ENCODE measurements at regions of chr16 and their contacts with region 1.

Region 1: DNA sequence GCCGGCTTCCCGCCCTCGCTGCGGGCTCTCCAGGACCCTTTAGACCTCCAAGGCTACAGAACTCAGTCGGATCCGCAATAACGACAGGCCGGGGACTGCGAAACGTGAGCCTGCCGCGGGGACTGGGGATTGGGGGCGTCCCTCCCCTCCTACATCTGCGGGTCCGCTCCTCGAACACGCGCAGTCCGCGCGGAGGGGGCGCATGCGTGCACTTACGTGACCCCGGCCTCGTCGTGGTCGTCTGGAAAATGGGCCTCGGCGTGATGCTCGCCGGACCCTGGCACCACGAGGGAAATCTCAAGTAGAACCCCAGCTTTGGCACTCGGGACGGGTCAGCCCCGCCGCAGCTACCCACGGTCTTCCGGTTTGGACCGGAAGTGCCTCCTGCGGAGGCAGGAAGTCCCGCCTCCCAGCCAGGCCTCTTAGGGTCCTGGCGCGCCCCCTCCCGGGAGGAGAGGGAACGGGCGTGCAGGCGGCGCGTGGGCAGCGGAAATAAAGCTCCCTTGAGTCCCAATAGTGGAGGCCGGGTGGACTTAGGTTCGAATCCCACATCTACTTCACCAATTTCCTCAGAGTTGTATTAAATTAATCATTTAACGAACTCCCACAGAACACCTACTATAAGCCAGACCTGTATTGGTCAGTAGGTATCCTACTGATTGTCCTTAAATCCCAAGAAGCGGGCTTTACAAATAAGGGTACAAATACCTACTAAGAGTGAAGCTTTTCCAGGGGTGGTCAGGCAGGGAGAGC is at the start of gene TAF1C:
- DNase-seq: peak; percentile 78 to 97 (median 88)
- ATAC-seq: peak; percentile 95
- H3K4me3 ChIP-seq: peak within 1 kb of the TSS; percentile 71
- H3K4me3 Mint-ChIP-seq: peak within 1 kb of the TSS; percentile 96
- H3K27ac ChIP-seq: peak within 1 kb of the TSS; percentile 60 to 72
- H3K27ac Mint-ChIP-seq: peak within 1 kb of the TSS; percentile 88
- H3K4me1 ChIP-seq: peaks cover 24% of the 10 kb centered on the region
- H3K4me1 Mint-ChIP-seq: peaks cover 29% of the 10 kb centered on the region
- H3K27me3 ChIP-seq: no peaks in the 10 kb centered on the region
- H3K27me3 Mint-ChIP-seq: no peaks in the 10 kb centered on the region
- CTCF ChIP-seq: peak; percentile 94
- total RNA-seq, gene TAF1C: 75.6 to 82.1 TPM

Region 2: GRCh38 chr16:83458612-83459011 is 728.2 kb before region 1 on chr16:
- CTCF ChIA-PET with region 1: no interaction called
- POLR2A ChIA-PET with region 1: no interaction called
- intact Hi-C with region 1: no loop called
- DNase-seq: no peak
- ATAC-seq: no peak
- H3K4me3 ChIP-seq: no peak overlapping the region
- H3K4me3 Mint-ChIP-seq: no peak overlapping the region
- H3K27ac ChIP-seq: no peak overlapping the region
- H3K27ac Mint-ChIP-seq: no peak overlapping the region
- H3K4me1 ChIP-seq: no peaks in the 10 kb centered on the region
- H3K4me1 Mint-ChIP-seq: no peaks in the 10 kb centered on the region
- H3K27me3 ChIP-seq: peaks cover 0 to 2% of the 10 kb centered on the region in 2 experiments
- H3K27me3 Mint-ChIP-seq: no peaks in the 10 kb centered on the region
- CTCF ChIP-seq: no peak

Region 3: DNA sequence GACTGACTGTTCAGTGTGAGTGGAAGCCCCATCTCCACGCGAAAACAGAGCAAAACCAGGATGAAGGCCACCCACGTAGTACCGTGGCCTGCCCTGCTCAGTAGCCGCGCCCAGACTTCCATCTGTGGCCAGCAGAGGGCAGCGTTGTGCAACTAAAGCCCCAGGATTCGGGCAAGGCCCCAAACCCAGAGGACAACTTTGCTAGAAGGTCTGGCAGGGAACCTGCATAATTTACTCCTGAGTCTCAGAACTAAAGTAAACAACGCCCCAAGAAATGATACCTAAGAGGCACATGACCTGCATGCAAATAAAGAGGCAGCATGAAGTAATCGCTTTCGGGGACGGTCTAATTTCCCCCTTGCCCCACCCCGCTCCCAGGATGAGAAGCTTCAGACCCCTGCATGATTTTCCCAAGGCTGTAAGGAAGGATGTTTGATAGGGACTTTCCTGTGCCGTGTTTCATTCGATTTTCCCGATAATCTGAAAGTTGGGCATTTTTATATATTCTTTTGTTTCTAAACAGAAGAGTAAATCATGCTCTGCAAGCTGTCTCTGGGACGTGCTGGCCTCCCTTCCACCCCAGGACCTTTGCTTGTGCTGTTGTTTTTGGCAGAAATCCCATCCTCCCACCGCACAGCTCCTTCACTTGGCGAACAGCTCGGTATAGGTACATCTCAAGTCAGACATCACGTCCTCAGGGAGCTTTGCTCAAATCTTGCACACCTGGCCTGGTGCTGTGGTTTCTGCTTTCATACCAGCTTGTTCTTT is 360.5 kb before region 1 on chr16:
- CTCF ChIA-PET with region 1: no interaction called
- POLR2A ChIA-PET with region 1: no interaction called
- intact Hi-C with region 1: loop called in 1 of 2 experiments (anchors 5 kb)
- DNase-seq: peak; percentile 63 to 85 (median 77)
- ATAC-seq: peak; percentile 98
- H3K4me3 ChIP-seq: no peak overlapping the region
- H3K4me3 Mint-ChIP-seq: no peak overlapping the region
- H3K27ac ChIP-seq: no peak overlapping the region
- H3K27ac Mint-ChIP-seq: no peak overlapping the region
- H3K4me1 ChIP-seq: peaks cover 6% of the 10 kb centered on the region
- H3K4me1 Mint-ChIP-seq: peaks cover 7% of the 10 kb centered on the region
- H3K27me3 ChIP-seq: no peaks in the 10 kb centered on the region
- H3K27me3 Mint-ChIP-seq: peaks cover 9% of the 10 kb centered on the region
- CTCF ChIP-seq: peak; percentile 84

Region 4: GRCh38 chr16:84116720-84117493 is 70.0 kb before region 1 on chr16 and contains the start of gene MBTPS1:
- CTCF ChIA-PET with region 1: interaction called, 44 read pairs
- POLR2A ChIA-PET with region 1: interaction called, 36 read pairs
- intact Hi-C with region 1: loop called (anchors 1 to 2 kb)
- DNase-seq: peak; percentile 94 to 99 (median 98)
- ATAC-seq: peak; percentile 84
- H3K4me3 ChIP-seq: peak within 1 kb of the TSS; percentile 91
- H3K4me3 Mint-ChIP-seq: peak within 1 kb of the TSS; percentile 96
- H3K27ac ChIP-seq: peak within 1 kb of the TSS; percentile 84 to 85
- H3K27ac Mint-ChIP-seq: peak within 1 kb of the TSS; percentile 98
- H3K4me1 ChIP-seq: peaks cover 37% of the 10 kb centered on the region
- H3K4me1 Mint-ChIP-seq: peaks cover 34% of the 10 kb centered on the region
- H3K27me3 ChIP-seq: no peaks in the 10 kb centered on the region
- H3K27me3 Mint-ChIP-seq: no peaks in the 10 kb centered on the region
- CTCF ChIP-seq: peak; percentile 49
- total RNA-seq, gene MBTPS1: 121 to 122 TPM

Region 5: DNA sequence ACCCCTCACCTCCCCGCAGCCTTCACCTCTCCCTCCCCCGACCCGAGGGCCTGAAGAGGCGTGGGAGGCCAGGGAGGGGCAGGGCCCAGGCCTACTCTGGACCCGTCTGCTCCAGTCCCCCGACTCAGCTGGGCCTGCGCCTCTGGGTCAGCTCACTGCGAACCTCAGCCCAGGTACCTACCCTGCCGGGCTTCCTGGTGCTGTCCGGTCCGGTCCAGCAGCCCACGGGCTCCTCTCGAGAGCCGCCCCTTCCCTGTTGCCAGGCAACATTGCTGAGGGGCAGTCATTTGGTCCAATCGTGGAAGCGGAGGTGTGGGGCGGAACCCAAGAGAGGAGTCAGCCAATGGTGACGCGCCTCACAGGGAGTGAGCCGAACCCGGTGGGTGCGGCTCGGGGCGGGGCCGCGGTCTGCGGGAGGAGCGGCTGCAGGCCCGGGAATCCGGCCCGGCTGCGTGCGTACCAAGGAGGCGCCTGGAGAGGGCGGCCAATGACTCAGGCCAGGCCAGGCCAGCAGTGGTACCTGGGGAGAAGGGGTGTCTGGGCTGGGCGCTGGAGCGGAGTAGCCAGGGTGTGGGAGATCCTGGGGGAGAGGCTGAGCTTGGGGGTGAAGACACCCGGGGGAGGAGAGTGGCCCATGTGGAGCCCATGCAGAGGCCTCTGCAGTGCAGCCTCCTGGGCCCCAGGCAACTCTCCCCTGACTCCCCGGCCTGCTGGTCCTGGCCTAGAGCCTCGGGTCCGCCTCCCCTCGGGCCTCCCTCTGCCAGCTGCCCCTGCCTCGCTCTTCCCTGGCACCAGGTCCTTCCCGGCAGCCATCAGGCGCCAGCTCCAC is 317.8 kb after region 1 on chr16 and contains the start of gene MEAK7:
- CTCF ChIA-PET with region 1: interaction called, 3 read pairs
- POLR2A ChIA-PET with region 1: no interaction called
- intact Hi-C with region 1: loop called in 1 of 2 experiments (anchors 10 kb)
- DNase-seq: peak; percentile 95 to 98 (median 98)
- ATAC-seq: peak; percentile 95
- H3K4me3 ChIP-seq: peak within 1 kb of the TSS; percentile 85
- H3K4me3 Mint-ChIP-seq: peak within 1 kb of the TSS; percentile 93
- H3K27ac ChIP-seq: peak within 1 kb of the TSS; percentile 34 to 46
- H3K27ac Mint-ChIP-seq: peak within 1 kb of the TSS; percentile 90
- H3K4me1 ChIP-seq: peaks cover 64% of the 10 kb centered on the region
- H3K4me1 Mint-ChIP-seq: peaks cover 62% of the 10 kb centered on the region
- H3K27me3 ChIP-seq: no peaks in the 10 kb centered on the region
- H3K27me3 Mint-ChIP-seq: no peaks in the 10 kb centered on the region
- CTCF ChIP-seq: no peak
- total RNA-seq, gene MEAK7: 1.9 to 3.7 TPM